A673 (cell line): ENCODE measurements at regions of chr14 and their contacts with region 1.

Region 1: GRCh38 chr14:99946652-99947489 is 118.4 kb upstream of the EVL start:
- DNase-seq: peak; percentile 51
- H3K4me3 ChIP-seq: peak overlapping the region; percentile 42
- H3K27ac ChIP-seq: no peak overlapping the region
- H3K4me1 ChIP-seq: peaks cover 9% of the 10 kb centered on the region
- H3K27me3 ChIP-seq: no peaks in the 10 kb centered on the region
- CTCF ChIP-seq: peak; percentile 99

Region 2: DNA sequence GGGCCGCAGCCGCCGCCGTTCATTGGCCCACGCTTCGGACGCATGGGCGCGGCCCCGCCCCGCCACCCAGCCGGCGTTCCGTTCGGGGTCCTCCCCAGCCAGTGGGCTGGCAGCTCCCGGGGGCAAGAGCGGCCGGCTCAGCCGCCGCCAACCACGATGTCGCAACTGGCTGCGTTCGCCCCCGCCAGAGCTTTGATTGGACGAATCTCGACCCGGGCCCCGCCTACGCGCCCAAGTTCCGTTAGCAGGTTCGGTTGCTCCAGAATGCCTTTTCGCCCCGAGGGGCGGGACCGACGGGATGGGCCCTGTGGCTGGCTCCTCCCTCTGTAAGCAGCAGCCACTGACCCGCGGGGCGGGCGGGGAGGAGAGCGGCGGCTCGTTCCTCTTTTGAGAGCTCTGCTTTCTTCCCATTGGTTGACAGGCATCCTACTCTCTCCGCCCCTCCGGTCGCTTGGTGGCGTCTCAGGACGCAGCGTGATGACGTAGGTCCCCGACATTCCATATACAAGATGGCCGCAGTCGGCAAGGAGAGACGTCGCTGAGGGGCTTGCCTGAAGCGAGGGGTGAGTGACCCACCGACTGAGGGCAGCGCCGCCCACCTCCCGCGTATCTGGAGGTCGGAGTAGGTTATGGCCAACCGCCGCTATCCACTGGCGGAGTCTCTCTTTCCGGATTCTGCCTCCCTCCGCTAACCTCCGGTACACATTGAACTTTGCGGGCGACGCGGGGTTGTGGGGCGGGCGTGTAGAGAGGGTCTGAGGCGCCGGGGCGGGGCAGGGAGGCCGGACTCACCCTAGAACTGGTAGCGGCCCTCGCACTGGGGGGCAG is 465.7 kb before region 1 on chr14 and contains the start of gene CCNK:
- CTCF ChIA-PET with region 1: no interaction called
- POLR2A ChIA-PET with region 1: no interaction called
- intact Hi-C with region 1: no loop called
- DNase-seq: peak; percentile 100
- H3K4me3 ChIP-seq: peak within 1 kb of the TSS; percentile 93
- H3K27ac ChIP-seq: peak within 1 kb of the TSS; percentile 93
- H3K4me1 ChIP-seq: peaks cover 26% of the 10 kb centered on the region
- H3K27me3 ChIP-seq: no peaks in the 10 kb centered on the region
- CTCF ChIP-seq: no peak
- total RNA-seq, gene CCNK: 88.0 and 88.2 TPM in 2 replicates

Region 3: DNA sequence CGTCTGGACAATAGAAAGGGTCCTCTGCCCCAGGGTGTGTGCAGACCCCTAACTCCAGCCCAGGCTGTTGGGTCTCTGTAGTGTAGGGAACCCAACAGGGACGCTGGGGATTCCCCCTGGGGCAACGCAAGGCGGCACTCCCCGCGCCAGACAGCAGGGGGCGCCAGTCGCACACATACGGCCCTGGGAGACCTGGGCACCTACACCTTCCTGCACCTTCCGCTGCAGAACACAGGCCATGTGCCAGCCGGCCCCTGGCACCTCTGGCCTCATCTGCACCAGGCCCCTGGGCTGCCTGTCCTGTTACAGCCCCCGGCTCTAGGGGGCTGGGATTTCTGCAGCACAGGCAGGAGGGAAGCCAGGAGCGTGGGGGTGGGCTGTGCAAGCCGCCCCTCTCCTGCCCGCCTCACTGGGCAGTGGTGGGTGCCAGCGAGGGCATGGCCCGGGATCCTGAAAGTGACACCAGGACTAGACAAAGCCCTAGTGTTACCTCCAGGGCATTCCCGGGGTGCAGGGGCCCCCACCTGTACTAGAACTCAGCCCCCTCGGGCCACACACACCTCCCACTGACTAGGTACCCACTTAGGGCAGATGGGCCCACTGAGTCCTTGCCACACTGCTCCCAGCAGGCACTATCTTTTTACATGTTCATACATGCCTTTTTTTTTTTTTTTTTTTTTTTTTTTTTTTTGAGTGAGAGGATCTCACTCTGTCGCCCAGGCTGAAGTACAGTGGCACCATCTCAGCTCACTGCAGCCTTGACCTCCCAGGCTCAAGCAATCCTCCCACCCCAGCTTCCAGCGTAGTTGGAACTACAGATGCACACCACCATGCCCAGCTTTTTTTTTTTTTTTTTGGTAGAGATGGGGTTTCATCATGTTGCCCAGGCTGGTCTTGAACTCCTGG is 428.2 kb before region 1 on chr14:
- CTCF ChIA-PET with region 1: no interaction called
- POLR2A ChIA-PET with region 1: no interaction called
- intact Hi-C with region 1: loop called (anchors 2 kb)
- DNase-seq: peak; percentile 67
- H3K4me3 ChIP-seq: no peak overlapping the region
- H3K27ac ChIP-seq: no peak overlapping the region
- H3K4me1 ChIP-seq: no peaks in the 10 kb centered on the region
- H3K27me3 ChIP-seq: no peaks in the 10 kb centered on the region
- CTCF ChIP-seq: peak; percentile 98

Region 4: DNA sequence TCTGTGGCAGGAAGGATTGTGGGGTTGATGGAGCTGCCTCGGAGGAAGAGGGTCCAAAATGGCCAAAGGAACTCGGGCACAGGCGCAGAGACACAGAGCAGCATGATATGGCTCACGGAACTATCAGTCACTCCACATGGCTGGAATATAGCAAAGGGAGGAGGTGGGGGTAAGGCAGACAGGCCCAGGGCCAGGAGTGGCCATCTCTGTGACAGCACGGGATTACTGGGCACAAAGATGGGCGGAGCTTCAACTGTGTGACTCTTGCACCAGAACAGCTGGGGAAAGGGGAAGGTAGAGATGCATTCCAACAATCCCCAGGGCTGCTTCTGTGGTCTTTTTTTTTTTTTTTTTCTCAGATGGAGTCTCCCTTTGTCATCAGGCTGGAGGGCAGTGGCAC is 178.5 kb before region 1 on chr14:
- CTCF ChIA-PET with region 1: interaction called, 12 read pairs
- POLR2A ChIA-PET with region 1: no interaction called
- intact Hi-C with region 1: no loop called
- DNase-seq: peak; percentile 22
- H3K4me3 ChIP-seq: no peak overlapping the region
- H3K27ac ChIP-seq: no peak overlapping the region
- H3K4me1 ChIP-seq: no peaks in the 10 kb centered on the region
- H3K27me3 ChIP-seq: no peaks in the 10 kb centered on the region
- CTCF ChIP-seq: no peak

Region 5: DNA sequence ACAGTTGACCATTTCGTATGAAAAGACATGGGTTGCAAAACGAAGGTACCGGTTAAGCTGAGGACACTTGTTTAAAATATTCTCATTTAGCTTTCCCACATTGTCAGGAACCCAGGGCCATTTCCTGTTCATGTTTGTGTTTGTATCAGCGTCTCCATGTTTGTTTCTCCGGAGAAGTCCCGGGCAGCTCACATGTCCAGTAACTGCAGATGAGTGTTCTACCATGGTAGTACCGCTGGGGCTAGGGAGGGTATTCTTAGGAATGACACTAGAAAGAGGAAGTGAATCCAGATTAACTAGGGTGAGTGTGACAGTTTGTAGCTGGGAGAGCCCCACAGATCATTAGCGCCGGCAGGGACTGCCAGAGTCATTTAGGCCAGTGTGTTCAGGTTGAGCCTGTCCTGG is 68.4 kb after region 1 on chr14:
- CTCF ChIA-PET with region 1: interaction called, 10 read pairs
- POLR2A ChIA-PET with region 1: no interaction called
- intact Hi-C with region 1: no loop called
- DNase-seq: no peak
- H3K4me3 ChIP-seq: no peak overlapping the region
- H3K27ac ChIP-seq: no peak overlapping the region
- H3K4me1 ChIP-seq: peaks cover 25% of the 10 kb centered on the region
- H3K27me3 ChIP-seq: no peaks in the 10 kb centered on the region
- CTCF ChIP-seq: no peak